T-cell (primary cell): ENCODE measurements at regions of chr2 and their contacts with region 1.

Region 1: GRCh38 chr2:138979131-138979785 is 199.1 kb upstream of the NXPH2 start:
- DNase-seq: no peak
- ATAC-seq: no peak
- H3K4me3 ChIP-seq: no peak overlapping the region
- H3K4me3 Mint-ChIP-seq: no peak overlapping the region
- H3K27ac ChIP-seq: no peak overlapping the region
- H3K27ac Mint-ChIP-seq: no peak overlapping the region
- H3K4me1 ChIP-seq: no peaks in the 10 kb centered on the region
- H3K4me1 Mint-ChIP-seq: no peaks in the 10 kb centered on the region
- H3K27me3 ChIP-seq: no peaks in the 10 kb centered on the region
- H3K27me3 Mint-ChIP-seq: no peaks in the 10 kb centered on the region

Region 2: GRCh38 chr2:139007130-139007529 is 27.9 kb after region 1 on chr2:
- CTCF ChIA-PET with region 1: no interaction called
- POLR2A ChIA-PET with region 1: interaction called in 1 of 2 experiments, 16 read pairs
- DNase-seq: no peak
- ATAC-seq: no peak
- H3K4me3 ChIP-seq: no peak overlapping the region
- H3K4me3 Mint-ChIP-seq: no peak overlapping the region
- H3K27ac ChIP-seq: no peak overlapping the region
- H3K27ac Mint-ChIP-seq: no peak overlapping the region
- H3K4me1 ChIP-seq: no peaks in the 10 kb centered on the region
- H3K4me1 Mint-ChIP-seq: no peaks in the 10 kb centered on the region
- H3K27me3 ChIP-seq: no peaks in the 10 kb centered on the region
- H3K27me3 Mint-ChIP-seq: no peaks in the 10 kb centered on the region